ENCODE measurements at regions of chr3 and their contacts with region 1.

Region 1: GRCh38 chr3:46895204-46895660 is 17.7 kb downstream of the PTH1R start:
- DNase-seq: peak; percentile 64
- H3K4me3 ChIP-seq: no peak overlapping the region
- H3K27ac ChIP-seq: no peak overlapping the region
- H3K4me1 ChIP-seq: no peaks in the 10 kb centered on the region
- H3K27me3 ChIP-seq: no peaks in the 10 kb centered on the region

Region 2: DNA sequence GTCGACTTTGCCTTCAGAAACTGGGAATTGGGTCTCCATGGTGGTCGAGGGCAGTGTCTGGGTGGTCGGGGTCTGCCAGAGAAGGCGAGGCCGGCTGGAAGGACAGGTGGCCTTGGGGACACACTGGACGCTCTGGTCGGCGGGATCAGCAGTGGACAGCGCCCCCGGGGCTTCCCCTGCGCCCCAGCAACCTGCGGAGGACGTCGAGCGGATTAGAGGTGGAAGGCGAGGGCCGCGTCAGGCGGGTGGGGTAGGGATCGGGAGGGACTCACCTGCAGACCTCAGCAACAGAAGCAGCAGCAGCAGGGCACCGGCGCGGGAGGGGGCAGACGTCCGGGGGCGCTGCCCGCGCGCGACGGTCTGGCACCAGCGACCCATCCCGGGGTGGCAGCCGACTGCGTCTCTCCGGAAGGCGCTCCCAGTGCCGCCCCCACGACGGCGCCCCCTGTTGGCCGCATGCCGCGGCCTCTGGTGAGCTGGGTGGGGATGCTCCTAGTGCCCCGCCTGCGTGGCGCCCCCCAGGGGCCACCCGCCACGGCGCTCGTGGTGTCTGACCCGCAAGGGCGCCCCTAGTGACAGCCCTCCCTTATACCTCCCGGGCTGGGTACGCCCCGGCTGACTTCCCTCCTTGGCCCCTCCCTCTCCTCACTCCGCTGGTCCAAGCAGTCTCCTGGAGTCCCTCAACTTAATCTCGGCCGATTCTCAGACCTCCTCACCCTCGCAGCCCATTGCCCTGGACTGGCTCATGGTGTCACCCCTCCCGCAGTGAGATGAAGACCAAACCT is 177.6 kb before region 1 on chr3 and contains the start of gene PRSS50:
- in situ Hi-C with region 1: loop called (anchors 10 kb)
- DNase-seq: peak; percentile 22
- H3K4me3 ChIP-seq: no peak within 1 kb of the TSS
- H3K27ac ChIP-seq: no peak within 1 kb of the TSS
- H3K4me1 ChIP-seq: no peaks in the 10 kb centered on the region
- H3K27me3 ChIP-seq: 0 out of 2 replicates have a peak, but pooled peaks cover 9% of the 10 kb centered on the region
- total RNA-seq, gene PRSS50: not detected in 2 replicates